ENCODE measurements at regions of chr1 and their contacts with region 1.

Region 1: DNA sequence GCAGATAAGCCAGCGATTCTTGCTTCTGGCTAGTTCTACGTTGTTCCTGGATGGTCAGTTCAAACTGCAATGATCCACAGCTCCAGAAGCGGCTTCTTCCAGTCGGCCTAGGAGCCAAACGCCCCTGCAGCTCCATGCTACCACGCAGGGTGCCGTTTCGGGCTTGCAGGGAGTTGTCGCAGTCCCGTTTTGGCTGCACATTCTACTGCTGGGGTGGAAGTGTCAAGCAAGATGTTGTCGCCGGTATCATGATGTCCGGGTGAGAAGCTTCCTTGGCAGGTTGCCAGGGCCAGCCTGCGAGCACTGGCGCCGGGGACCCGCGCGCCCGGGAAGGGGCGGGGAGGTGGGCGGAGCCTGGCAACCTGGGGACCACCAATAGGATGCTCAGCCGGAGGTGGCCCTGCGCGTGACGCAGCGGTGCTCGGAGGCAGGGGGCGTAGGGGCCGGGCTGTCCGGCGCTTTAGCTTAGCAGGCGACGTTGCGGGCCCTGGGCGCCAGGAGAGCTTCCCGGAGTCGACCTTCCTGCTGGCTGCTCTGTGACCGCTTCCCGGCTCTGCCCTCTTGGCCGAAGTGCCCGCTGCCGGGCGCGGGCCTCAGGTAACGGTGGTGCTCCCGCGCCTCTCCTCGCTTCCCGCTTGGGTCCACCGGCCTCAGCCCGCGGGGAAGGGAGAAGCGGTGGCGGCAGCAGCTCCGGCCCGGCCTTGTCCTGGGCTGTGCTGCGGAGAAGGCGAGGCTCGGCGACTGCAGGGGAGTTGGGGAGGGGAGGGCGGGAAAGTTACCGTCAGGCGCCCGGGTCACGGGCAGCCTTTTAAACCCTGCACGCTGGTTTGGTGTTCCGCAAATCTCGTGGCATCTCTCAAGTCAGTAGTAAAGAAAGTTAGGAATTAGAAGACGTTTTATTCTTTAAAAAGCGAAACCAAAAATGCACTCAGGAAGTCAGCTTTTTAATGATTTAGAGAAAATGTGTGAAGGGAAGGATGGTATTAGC is at the start of gene SOAT1:
- DNase-seq: peak; percentile 81 to 99 (median 93)
- ATAC-seq: peak; percentile 91
- H3K4me3 ChIP-seq: peak within 1 kb of the TSS; percentile 80
- H3K4me3 Mint-ChIP-seq: peak within 1 kb of the TSS; percentile 93
- H3K27ac ChIP-seq: peak within 1 kb of the TSS; percentile 77 to 81
- H3K27ac Mint-ChIP-seq: peak within 1 kb of the TSS; percentile 85
- H3K4me1 ChIP-seq: peaks cover 38% of the 10 kb centered on the region
- H3K4me1 Mint-ChIP-seq: peaks cover 44% of the 10 kb centered on the region
- H3K27me3 ChIP-seq: no peaks in the 10 kb centered on the region
- H3K27me3 Mint-ChIP-seq: no peaks in the 10 kb centered on the region
- CTCF ChIP-seq: no peak
- total RNA-seq, gene SOAT1: 35.7 to 37.2 TPM

Region 2: GRCh38 chr1:179034720-179035119 is 258.9 kb before region 1 on chr1:
- CTCF ChIA-PET with region 1: no interaction called
- POLR2A ChIA-PET with region 1: no interaction called
- intact Hi-C with region 1: loop called in 1 of 2 experiments (anchors 5 kb)
- DNase-seq: peak in 1 of 14 experiments; percentile 43
- ATAC-seq: peak; percentile 36
- H3K4me3 ChIP-seq: no peak overlapping the region
- H3K4me3 Mint-ChIP-seq: peak overlapping the region; percentile 0
- H3K27ac ChIP-seq: no peak overlapping the region
- H3K27ac Mint-ChIP-seq: peak overlapping the region; percentile 67
- H3K4me1 ChIP-seq: peaks cover 22% of the 10 kb centered on the region
- H3K4me1 Mint-ChIP-seq: peaks cover 87% of the 10 kb centered on the region
- H3K27me3 ChIP-seq: no peaks in the 10 kb centered on the region
- H3K27me3 Mint-ChIP-seq: no peaks in the 10 kb centered on the region
- CTCF ChIP-seq: no peak

Region 3: DNA sequence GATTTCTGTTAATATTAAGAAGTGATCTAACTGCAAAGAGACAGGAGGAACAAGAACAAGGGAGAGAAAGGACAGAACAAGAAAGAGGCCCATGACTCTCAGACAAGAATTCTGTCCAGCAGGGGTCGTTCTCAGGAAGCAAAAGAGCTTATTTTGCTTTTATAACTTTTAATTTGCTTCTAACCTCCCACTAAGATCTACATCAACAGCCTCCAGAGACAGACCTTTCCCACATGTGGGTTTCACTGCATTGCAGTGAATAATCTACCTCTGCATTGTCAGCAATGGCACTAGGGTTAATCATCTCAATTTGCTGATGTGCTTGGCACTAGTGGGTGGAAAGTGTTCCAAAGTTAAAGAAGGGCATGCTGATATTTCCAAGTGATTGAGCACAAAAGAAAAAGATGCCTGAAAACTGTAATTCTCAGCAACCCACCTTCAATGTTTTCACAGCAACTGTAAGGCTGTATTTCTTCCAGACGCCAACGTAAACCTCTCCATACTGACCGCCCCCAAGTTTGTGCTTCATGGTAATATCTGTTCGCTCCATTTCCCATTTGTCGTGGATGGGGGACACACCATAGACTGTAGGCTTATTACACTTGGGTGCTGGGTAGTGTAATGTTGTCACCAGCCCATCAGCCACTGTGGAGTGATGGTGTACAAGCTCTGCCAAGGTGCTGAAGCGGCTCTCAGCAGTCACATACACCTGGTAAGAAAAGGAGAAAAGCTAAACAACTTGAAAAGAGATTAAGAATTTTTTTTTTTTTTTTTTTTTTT is 172.3 kb before region 1 on chr1:
- CTCF ChIA-PET with region 1: interaction called, 10 read pairs
- POLR2A ChIA-PET with region 1: interaction called, 4 read pairs
- intact Hi-C with region 1: loop called (anchors 1 to 5 kb)
- DNase-seq: peak in 11 of 14 experiments; percentile 18 to 69 (median 32)
- ATAC-seq: peak; percentile 64
- H3K4me3 ChIP-seq: no peak overlapping the region
- H3K4me3 Mint-ChIP-seq: no peak overlapping the region
- H3K27ac ChIP-seq: no peak overlapping the region
- H3K27ac Mint-ChIP-seq: no peak overlapping the region
- H3K4me1 ChIP-seq: no peaks in the 10 kb centered on the region
- H3K4me1 Mint-ChIP-seq: peaks cover 5% of the 10 kb centered on the region
- H3K27me3 ChIP-seq: no peaks in the 10 kb centered on the region
- H3K27me3 Mint-ChIP-seq: no peaks in the 10 kb centered on the region
- CTCF ChIP-seq: peak; percentile 61

Region 4: DNA sequence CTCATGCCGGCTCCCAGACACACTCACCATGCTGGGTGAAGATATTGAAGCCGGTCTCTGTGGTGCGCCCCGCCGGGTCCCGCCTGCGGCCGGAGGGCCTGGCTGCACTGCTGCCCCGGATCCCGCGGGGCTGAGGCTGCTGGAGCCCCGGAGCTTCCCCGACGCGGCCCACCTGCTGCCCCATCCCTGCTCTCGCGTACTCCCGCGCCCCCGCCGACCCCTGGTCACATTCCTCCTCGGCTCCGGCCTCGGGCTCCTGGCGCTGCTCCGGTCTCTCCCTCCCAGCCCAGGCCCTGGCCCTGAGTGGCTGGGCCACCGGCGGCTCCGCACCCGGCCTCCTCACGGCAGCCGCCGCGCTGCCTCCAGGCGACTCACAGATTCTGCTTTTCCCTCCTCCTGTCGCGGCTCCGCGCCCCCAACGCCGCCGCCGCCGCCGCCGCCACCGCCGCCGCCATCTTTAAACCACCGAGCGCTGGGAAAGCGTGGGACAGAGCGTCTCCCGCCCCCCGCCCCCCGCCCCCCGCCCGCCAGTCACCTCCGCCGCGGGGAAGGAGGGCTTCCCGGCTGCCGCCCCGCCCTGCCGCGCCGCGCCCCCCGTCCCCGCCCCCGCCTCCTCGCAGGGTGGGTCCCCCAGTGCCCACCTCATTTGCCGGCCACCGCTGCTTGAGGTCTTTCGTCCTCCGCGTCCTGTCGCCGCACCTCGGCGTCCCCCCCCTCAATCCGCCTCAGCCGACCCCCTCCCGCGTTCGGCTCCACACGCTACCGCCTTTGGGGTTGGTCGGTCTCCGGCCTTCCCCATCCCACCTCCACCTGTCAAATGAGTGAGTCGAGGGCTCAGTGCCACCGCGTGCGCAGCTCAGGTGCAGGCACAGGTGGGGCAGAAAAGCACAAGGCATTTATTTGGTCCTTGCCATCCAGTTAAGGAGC is 64.2 kb before region 1 on chr1 and contains the start of gene ABL2:
- CTCF ChIA-PET with region 1: interaction called, 3 read pairs
- POLR2A ChIA-PET with region 1: interaction called, 4 read pairs
- intact Hi-C with region 1: loop called (anchors 1 to 2 kb)
- DNase-seq: peak; percentile 11 to 74 (median 45)
- ATAC-seq: peak; percentile 63
- H3K4me3 ChIP-seq: peak within 1 kb of the TSS; percentile 57
- H3K4me3 Mint-ChIP-seq: peak within 1 kb of the TSS; percentile 98
- H3K27ac ChIP-seq: peak within 1 kb of the TSS in 1 of 2 donors; percentile 57
- H3K27ac Mint-ChIP-seq: peak within 1 kb of the TSS; percentile 82
- H3K4me1 ChIP-seq: peaks cover 11% of the 10 kb centered on the region
- H3K4me1 Mint-ChIP-seq: peaks cover 35% of the 10 kb centered on the region
- H3K27me3 ChIP-seq: no peaks in the 10 kb centered on the region
- H3K27me3 Mint-ChIP-seq: no peaks in the 10 kb centered on the region
- CTCF ChIP-seq: no peak
- total RNA-seq, gene ABL2: 15.8 to 16.4 TPM

Region 5: GRCh38 chr1:179882243-179883039 is 588.8 kb after region 1 on chr1 and contains the start of gene TOR1AIP1:
- CTCF ChIA-PET with region 1: no interaction called
- POLR2A ChIA-PET with region 1: interaction called, 12 read pairs
- intact Hi-C with region 1: loop called in 1 of 2 experiments (anchors 10 kb)
- DNase-seq: peak; percentile 95 to 99 (median 96)
- ATAC-seq: peak; percentile 73
- H3K4me3 ChIP-seq: peak within 1 kb of the TSS; percentile 83
- H3K4me3 Mint-ChIP-seq: peak within 1 kb of the TSS; percentile 98
- H3K27ac ChIP-seq: peak within 1 kb of the TSS; percentile 99
- H3K27ac Mint-ChIP-seq: peak within 1 kb of the TSS; percentile 100
- H3K4me1 ChIP-seq: peaks cover 26% of the 10 kb centered on the region
- H3K4me1 Mint-ChIP-seq: peaks cover 60% of the 10 kb centered on the region
- H3K27me3 ChIP-seq: no peaks in the 10 kb centered on the region
- H3K27me3 Mint-ChIP-seq: no peaks in the 10 kb centered on the region
- CTCF ChIP-seq: peak; percentile 16
- total RNA-seq, gene TOR1AIP1: 93.8 to 94.4 TPM